Endothelial cell of umbilical vein (primary cell): ENCODE measurements at regions of chr1 and their contacts with region 1.

Region 1: DNA sequence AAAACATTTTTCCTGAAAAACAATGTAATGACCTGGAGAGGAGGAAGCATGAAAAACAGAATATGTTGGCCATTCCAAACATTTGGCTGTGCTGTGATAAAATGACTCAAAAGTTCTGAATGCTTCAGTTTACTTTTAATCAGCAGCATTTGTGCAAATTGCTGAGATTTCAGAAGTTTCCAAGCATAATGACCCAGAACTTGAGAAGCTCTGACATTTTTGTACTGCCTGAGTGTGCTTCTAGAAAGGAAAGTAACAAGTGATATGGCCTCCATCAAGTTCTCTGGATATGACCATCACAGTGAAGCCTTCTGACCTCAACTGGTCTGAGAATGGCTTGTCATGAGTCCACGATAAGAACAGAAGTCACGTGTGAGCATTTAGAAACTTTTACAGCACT is 283.4 kb upstream of the ZRANB2 start:
- DNase-seq: peak; percentile 6
- H3K4me3 ChIP-seq: no peak overlapping the region
- H3K27ac ChIP-seq: no peak overlapping the region
- H3K4me1 ChIP-seq: no peaks in the 10 kb centered on the region
- H3K27me3 ChIP-seq: no peaks in the 10 kb centered on the region
- CTCF ChIP-seq: no peak
- POLR2A ChIP-seq: no peak

Region 2: GRCh38 chr1:71303617-71304041 is 60.6 kb before region 1 on chr1:
- CTCF ChIA-PET with region 1: no interaction called
- POLR2A ChIA-PET with region 1: no interaction called
- dilution Hi-C with region 1: no loop called
- intact Hi-C with region 1: loop called (anchors 5 kb)
- DNase-seq: peak; percentile 65
- H3K4me3 ChIP-seq: no peak overlapping the region
- H3K27ac ChIP-seq: peak overlapping the region; percentile 25
- H3K4me1 ChIP-seq: peaks cover 23% of the 10 kb centered on the region
- H3K27me3 ChIP-seq: no peaks in the 10 kb centered on the region
- CTCF ChIP-seq: no peak
- POLR2A ChIP-seq: no peak